BJ (cell line): ENCODE measurements at regions of chr17 and their contacts with region 1.

Region 1: GRCh38 chr17:41695954-41696756 is 7.5 kb downstream of the EIF1 start:
- DNase-seq: no peak
- H3K4me3 ChIP-seq: no peak overlapping the region
- H3K27me3 ChIP-seq: no peaks in the 10 kb centered on the region
- CTCF ChIP-seq: peak; percentile 83

Region 2: DNA sequence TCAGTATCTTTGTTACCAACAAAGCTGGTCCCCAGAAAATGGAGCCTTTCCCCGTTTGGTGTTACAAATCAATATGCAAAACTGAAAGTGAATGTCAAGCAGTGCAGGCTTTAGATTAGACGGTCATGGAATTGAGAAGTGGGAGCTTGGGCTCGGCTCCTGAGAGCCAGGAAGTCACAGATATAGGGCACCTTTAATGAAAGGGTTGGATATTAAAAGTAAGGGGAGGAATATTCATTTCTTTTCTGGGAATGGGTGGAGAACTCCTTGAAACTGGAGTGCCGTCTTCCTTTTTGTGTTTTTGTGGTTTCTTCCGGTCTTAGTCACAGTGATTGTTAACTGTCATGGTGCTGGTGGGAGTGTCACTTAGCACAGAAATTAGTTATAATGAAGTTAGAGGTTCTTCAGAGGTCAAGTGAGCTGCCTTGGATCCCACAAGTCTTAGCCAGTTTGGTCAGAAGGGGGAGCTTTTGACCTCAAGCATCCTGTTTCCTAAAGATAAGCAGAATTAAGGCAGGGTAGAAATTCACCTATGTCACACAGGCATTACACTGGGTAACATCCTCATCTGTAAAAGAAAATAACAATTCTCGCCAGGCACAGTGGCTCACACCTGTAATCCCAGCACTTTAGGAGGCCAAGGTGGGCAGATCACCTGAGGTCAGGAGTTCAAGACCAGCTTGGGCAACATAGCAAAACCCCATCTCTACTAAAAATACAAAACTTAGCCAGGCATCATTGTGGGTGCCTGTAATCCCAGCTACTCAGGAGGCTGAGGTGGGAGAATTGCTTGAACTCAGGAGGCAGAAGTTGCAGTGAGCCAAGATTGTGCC is 17.0 kb before region 1 on chr17:
- CTCF ChIA-PET with region 1: interaction called, 27 read pairs
- POLR2A ChIA-PET with region 1: interaction called, 3 read pairs
- DNase-seq: no peak
- H3K4me3 ChIP-seq: no peak overlapping the region
- H3K27me3 ChIP-seq: peaks cover 1% of the 10 kb centered on the region; the same call in 1 of the 2 replicates
- CTCF ChIP-seq: peak; percentile 19; the same call in 1 of the 2 replicates

Region 3: DNA sequence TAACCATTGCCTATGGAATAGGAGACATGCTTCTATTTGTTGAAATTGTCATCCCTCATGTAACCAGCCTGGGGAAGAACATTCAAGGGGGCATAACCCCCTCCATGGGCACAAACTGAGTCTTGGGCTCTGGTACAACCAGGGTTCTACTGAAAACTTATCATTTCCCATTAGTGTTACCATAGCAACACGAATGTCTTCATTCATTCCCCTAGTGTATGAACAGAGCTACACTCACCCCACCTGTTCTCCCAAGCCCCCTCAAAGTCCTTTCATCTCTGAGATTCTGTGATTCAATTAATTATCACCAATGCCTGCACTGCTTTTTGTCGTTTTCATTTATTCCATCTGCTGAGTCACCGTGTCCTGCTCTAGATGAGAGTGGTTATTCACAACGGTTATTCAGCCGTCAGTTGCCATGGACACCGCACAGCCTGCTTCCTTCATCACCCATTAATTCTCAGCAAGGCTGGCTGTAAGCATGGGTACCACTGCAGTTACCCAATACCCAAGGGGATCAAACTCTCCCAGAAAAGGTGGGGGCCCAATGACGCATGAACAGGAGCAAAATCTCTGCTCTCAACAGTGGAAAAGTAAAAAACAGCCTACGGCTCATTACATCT is 14.4 kb after region 1 on chr17:
- CTCF ChIA-PET with region 1: interaction called, 18 read pairs
- POLR2A ChIA-PET with region 1: no interaction called
- DNase-seq: no peak
- H3K4me3 ChIP-seq: no peak overlapping the region
- H3K27me3 ChIP-seq: peaks cover 8% of the 10 kb centered on the region; the same call in 1 of the 2 replicates
- CTCF ChIP-seq: no peak

Region 4: DNA sequence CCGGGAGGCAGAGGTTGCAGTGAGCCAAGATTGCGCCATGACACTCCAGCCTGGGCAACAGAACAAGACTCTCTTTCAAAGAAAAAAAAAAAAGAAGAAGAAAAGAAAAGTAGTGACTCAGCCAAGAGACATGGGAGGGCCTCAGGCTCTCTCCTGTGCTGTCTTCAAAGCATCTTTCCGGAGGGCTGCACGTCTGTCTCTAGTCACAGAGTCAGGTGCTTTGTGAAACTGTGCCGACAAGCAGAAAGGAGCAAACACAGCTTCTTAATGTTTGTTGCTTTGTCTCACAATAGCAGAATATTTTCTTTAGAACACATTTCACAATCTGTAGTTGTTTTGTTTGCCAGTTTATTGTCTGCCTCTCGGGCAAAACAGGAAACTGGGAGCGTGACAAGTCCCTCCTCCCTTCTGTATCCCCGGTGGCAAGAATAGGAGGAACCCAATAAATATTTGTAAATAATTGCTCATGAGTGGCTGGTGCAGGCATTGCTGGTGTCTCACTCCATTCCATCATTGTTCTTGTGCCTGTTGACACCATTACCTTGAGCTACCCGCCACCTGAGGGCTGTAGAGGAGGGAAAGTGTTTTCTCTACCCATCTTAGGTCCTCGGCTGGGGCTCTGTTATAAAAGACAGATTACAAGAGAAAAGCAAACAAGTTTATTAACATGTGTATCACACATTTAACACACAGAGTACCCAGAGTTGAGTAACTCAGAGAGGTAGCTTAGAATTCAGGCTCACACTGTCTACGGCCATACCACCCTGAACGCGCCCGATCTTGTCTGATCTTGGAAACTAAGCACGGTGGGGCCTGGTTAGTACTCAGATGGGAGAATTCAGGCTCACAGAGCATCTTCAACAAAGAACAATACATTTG is 21.5 kb after region 1 on chr17:
- CTCF ChIA-PET with region 1: interaction called, 13 read pairs
- POLR2A ChIA-PET with region 1: no interaction called
- DNase-seq: no peak
- H3K4me3 ChIP-seq: no peak overlapping the region
- H3K27me3 ChIP-seq: 0 out of 2 replicates have a peak, but pooled peaks cover 3% of the 10 kb centered on the region
- CTCF ChIP-seq: no peak